ENCODE measurements at regions of chr12 and their contacts with region 1.

Region 1: DNA sequence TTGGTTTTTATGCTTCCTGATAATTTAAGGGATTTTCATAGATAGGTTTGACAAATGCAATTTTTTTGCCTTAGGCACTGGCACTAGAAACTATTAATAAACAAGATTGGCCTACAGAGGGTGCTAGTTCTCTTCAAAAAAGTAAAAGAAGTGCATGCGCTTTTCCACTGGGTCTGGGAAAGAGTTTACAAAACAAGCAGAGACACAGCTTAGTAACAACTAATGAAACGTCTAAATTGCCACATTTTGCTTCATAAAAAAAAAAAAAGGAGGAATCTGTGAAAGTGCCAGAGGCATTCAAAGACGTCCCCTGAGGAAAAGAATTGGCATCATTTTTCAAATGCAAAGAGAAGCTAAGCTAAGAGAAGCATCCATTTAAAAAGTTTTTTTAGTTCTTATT is 58.3 kb upstream of the EEA1 start:
- DNase-seq: no peak
- ATAC-seq: peak; percentile 54
- H3K4me3 ChIP-seq: peak overlapping the region; percentile 32; the same call in 1 of the 2 replicates
- H3K27ac ChIP-seq: peak overlapping the region; percentile 94
- H3K4me1 ChIP-seq: peaks cover 27% of the 10 kb centered on the region
- H3K27me3 ChIP-seq: no peaks in the 10 kb centered on the region
- CTCF ChIP-seq: peak; percentile 39 to 64 (median 52); a peak in 5 of 6 replicates
- EP300 ChIP-seq: peak in 1 of 2 experiments; percentile 32; a peak in 1 of 4 replicates
- POLR2A ChIP-seq: no peak
- RAD21 ChIP-seq: peak; percentile 84

Region 2: GRCh38 chr12:92369643-92370042 is 617.7 kb before region 1 on chr12:
- CTCF ChIA-PET with region 1: no interaction called
- POLR2A ChIA-PET with region 1: no interaction called
- RAD21 ChIA-PET with region 1: no interaction called
- SMC1A ChIA-PET with region 1: no interaction called
- in situ Hi-C with region 1: no loop called
- intact Hi-C with region 1: no loop called
- DNase-seq: no peak
- ATAC-seq: no peak
- H3K4me3 ChIP-seq: no peak overlapping the region
- H3K27ac ChIP-seq: no peak overlapping the region
- H3K4me1 ChIP-seq: peaks cover 19% of the 10 kb centered on the region
- H3K27me3 ChIP-seq: no peaks in the 10 kb centered on the region
- CTCF ChIP-seq: no peak
- EP300 ChIP-seq: no peak
- POLR2A ChIP-seq: no peak
- RAD21 ChIP-seq: no peak

Region 3: GRCh38 chr12:92854344-92854743 is 133.0 kb before region 1 on chr12:
- CTCF ChIA-PET with region 1: no interaction called
- POLR2A ChIA-PET with region 1: no interaction called
- RAD21 ChIA-PET with region 1: no interaction called
- SMC1A ChIA-PET with region 1: no interaction called
- in situ Hi-C with region 1: no loop called
- intact Hi-C with region 1: no loop called
- DNase-seq: no peak
- ATAC-seq: no peak
- H3K4me3 ChIP-seq: no peak overlapping the region
- H3K27ac ChIP-seq: no peak overlapping the region
- H3K4me1 ChIP-seq: no peaks in the 10 kb centered on the region
- H3K27me3 ChIP-seq: no peaks in the 10 kb centered on the region
- CTCF ChIP-seq: no peak
- EP300 ChIP-seq: no peak
- POLR2A ChIP-seq: no peak
- RAD21 ChIP-seq: no peak

Region 4: DNA sequence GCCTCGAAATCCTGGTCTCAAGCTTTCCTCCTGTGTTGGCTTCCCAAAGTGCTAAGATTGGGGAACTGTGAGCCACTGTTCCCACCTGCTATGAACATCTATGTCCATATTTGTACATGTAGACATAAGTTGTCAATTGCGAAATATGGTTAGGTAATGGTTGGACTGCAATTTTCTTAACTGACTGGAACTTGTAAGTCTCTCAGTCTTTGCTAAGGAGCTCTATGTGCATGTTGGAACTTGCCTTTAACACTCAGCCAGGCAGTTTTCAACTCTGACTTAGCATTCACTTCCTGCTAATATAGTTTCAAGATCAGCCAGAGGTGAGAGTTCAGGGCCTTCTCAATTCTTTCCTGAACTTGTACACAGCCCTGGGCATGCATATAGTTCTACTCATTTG is 13.8 kb before region 1 on chr12:
- CTCF ChIA-PET with region 1: interaction called, 78 read pairs
- POLR2A ChIA-PET with region 1: interaction called, 6 read pairs
- RAD21 ChIA-PET with region 1: interaction called, 32 read pairs
- SMC1A ChIA-PET with region 1: interaction called, 45 read pairs
- in situ Hi-C with region 1: no loop called
- intact Hi-C with region 1: loop called (anchors 2 kb)
- DNase-seq: peak; percentile 95
- ATAC-seq: peak; percentile 62
- H3K4me3 ChIP-seq: no peak overlapping the region
- H3K27ac ChIP-seq: peak overlapping the region; percentile 91
- H3K4me1 ChIP-seq: peaks cover 55% of the 10 kb centered on the region
- H3K27me3 ChIP-seq: no peaks in the 10 kb centered on the region
- CTCF ChIP-seq: no peak
- EP300 ChIP-seq: peak; percentile 20 to 21; a peak in 1 of 4 replicates
- POLR2A ChIP-seq: no peak
- RAD21 ChIP-seq: no peak

Region 5: DNA sequence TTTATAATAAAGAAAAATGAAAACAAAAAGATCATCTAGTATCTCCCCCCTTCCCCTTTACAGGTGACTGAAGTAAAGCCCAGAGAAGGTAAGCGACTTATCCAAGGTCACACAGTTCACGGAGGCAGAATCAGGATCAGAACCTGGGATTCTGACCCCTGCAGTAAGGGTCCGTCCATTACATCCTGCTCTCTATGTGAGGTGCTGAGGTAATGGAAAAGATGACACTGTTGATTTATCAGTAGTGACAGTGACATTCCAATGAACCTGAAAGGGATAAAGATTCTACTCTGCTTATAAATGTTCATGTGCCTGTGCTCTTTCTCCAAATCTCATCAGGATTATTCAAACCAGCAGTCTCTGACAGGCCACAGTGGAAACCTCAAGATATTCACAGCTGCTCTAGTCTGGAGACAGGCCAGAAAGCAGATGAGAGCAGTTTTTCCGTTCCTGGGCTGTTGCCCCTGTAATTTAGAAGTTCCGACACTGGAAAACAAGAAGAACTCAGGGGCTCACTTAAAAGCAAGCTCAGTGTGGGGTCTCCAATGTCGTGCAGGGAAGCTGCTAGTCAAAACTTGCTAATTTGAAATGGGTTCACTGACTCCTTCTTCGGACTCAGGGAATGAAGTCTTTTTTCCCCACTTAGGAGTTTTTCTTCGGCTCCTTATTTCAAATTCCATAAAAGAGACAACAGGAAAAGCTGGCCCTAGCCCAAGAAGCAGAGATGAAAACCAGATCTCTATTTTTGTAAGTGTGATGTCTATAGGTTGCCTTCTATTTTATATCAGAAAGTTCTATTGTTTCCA is 73.5 kb after region 1 on chr12:
- CTCF ChIA-PET with region 1: interaction called, 5 read pairs
- POLR2A ChIA-PET with region 1: no interaction called
- RAD21 ChIA-PET with region 1: interaction called, 14 read pairs
- SMC1A ChIA-PET with region 1: interaction called, 6 read pairs
- in situ Hi-C with region 1: no loop called
- intact Hi-C with region 1: loop called (anchors 2 kb)
- DNase-seq: peak; percentile 21
- ATAC-seq: peak; percentile 61
- H3K4me3 ChIP-seq: 0 out of 2 replicates have a peak overlapping the region, but pooled peaks have one; percentile 2
- H3K27ac ChIP-seq: peak overlapping the region; percentile 61
- H3K4me1 ChIP-seq: peaks cover 26% of the 10 kb centered on the region
- H3K27me3 ChIP-seq: no peaks in the 10 kb centered on the region
- CTCF ChIP-seq: no peak
- EP300 ChIP-seq: peak in 1 of 2 experiments; percentile 29; a peak in 1 of 4 replicates
- POLR2A ChIP-seq: no peak
- RAD21 ChIP-seq: peak; percentile 8; the same call in 1 of the 2 replicates

Region 6: GRCh38 chr12:93137656-93138612 is 150.6 kb after region 1 on chr12:
- CTCF ChIA-PET with region 1: interaction called, 72 read pairs
- POLR2A ChIA-PET with region 1: interaction called, 11 read pairs
- RAD21 ChIA-PET with region 1: interaction called, 99 read pairs
- SMC1A ChIA-PET with region 1: interaction called, 77 read pairs
- in situ Hi-C with region 1: no loop called
- intact Hi-C with region 1: loop called (anchors 1 kb)
- DNase-seq: no peak
- ATAC-seq: peak; percentile 77
- H3K4me3 ChIP-seq: no peak overlapping the region
- H3K27ac ChIP-seq: peak overlapping the region; percentile 59; the same call in 1 of the 2 replicates
- H3K4me1 ChIP-seq: peaks cover 45% of the 10 kb centered on the region
- H3K27me3 ChIP-seq: no peaks in the 10 kb centered on the region
- CTCF ChIP-seq: no peak
- EP300 ChIP-seq: no peak; a peak in 1 of 4 replicates
- POLR2A ChIP-seq: no peak
- RAD21 ChIP-seq: no peak

Region 7: GRCh38 chr12:93387780-93388179 is 400.4 kb after region 1 on chr12:
- CTCF ChIA-PET with region 1: interaction called, 93 read pairs
- POLR2A ChIA-PET with region 1: interaction called, 5 read pairs
- RAD21 ChIA-PET with region 1: interaction called, 104 read pairs
- SMC1A ChIA-PET with region 1: interaction called, 124 read pairs
- in situ Hi-C with region 1: loop called (anchors 5 kb)
- intact Hi-C with region 1: no loop called
- DNase-seq: no peak
- ATAC-seq: peak; percentile 76
- H3K4me3 ChIP-seq: peak overlapping the region; percentile 6
- H3K27ac ChIP-seq: peak overlapping the region; percentile 35; the same call in 1 of the 2 replicates
- H3K4me1 ChIP-seq: peaks cover 27% of the 10 kb centered on the region
- H3K27me3 ChIP-seq: no peaks in the 10 kb centered on the region
- CTCF ChIP-seq: no peak
- EP300 ChIP-seq: no peak
- POLR2A ChIP-seq: no peak
- RAD21 ChIP-seq: no peak

Region 8: DNA sequence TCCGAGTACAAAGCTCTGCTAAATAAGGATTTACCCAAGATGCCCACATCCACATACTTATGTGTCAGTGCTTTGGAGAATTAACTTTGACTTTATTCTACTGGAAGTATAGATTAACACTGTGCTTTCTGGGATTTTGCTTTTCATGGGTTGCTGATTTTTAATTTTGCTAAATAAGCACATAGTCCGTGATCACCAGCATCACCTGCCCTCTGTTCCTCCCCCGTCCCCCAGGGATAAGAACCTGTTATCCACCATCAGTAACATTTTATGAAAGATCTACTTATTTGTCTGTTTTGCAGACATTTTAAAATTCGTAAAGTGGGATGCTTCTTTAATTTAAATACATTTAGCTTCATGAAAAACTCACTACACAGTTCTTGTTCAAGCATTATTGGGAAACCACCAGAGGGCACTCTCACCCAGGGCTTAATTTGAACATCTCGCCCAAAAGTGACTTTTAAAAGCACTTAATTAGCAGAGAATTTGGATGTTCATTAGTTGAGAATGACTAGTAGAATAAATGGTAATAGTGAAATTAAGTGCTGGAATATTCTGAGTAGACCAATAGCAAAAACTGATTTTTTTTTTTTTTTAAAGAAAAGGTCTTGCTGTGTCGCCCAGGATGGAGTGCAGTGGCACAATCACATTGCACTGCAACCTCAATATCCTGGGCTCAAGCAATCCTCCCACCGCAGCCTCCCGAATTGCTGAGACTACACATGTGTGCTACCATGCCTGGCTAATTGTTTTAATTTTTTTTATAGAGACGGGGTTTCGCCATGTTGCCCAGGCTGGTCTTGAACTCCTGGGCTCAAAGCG is 515.7 kb after region 1 on chr12:
- CTCF ChIA-PET with region 1: interaction called, 16 read pairs
- POLR2A ChIA-PET with region 1: no interaction called
- RAD21 ChIA-PET with region 1: interaction called, 10 read pairs
- SMC1A ChIA-PET with region 1: interaction called, 17 read pairs
- in situ Hi-C with region 1: no loop called
- intact Hi-C with region 1: no loop called
- DNase-seq: no peak
- ATAC-seq: peak; percentile 58
- H3K4me3 ChIP-seq: no peak overlapping the region
- H3K27ac ChIP-seq: no peak overlapping the region
- H3K4me1 ChIP-seq: peaks cover 5% of the 10 kb centered on the region; the same call in 1 of the 2 replicates
- H3K27me3 ChIP-seq: no peaks in the 10 kb centered on the region
- CTCF ChIP-seq: peak; percentile 64 to 73 (median 72)
- EP300 ChIP-seq: no peak
- POLR2A ChIP-seq: no peak
- RAD21 ChIP-seq: peak; percentile 84

Region 9: DNA sequence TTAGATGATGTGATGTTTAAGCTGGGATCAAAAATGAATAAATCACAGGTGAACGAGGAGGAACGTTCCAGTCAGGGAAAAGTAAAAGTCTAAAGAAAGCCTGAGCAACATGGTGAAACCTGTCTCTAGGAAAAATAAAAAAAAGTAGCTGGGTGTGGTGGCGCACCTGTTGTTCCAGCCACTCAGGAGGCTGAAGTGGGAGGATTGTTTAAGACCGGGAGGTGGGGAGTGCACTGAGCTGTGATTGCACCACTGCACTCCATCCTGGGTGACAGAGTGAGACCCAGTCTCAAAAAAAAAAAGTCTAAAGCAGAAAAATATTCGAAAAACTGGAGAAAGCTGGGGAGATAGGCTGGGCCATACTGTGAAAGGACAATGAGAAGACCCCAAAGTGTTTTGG is 545.9 kb after region 1 on chr12:
- CTCF ChIA-PET with region 1: no interaction called
- POLR2A ChIA-PET with region 1: no interaction called
- RAD21 ChIA-PET with region 1: no interaction called
- SMC1A ChIA-PET with region 1: no interaction called
- in situ Hi-C with region 1: no loop called
- intact Hi-C with region 1: no loop called
- DNase-seq: no peak
- ATAC-seq: no peak
- H3K4me3 ChIP-seq: no peak overlapping the region
- H3K27ac ChIP-seq: no peak overlapping the region
- H3K4me1 ChIP-seq: peaks cover 10% of the 10 kb centered on the region
- H3K27me3 ChIP-seq: no peaks in the 10 kb centered on the region
- CTCF ChIP-seq: no peak
- EP300 ChIP-seq: no peak
- POLR2A ChIP-seq: no peak
- RAD21 ChIP-seq: no peak